Activated CD4-positive, alpha-beta T cell treated with anti-CD3 and anti-CD28 coated beads, Interleukin-2, amount 10 ng/mL, durations not matched to agents 24 days and 14 days (primary cell): ENCODE measurements at regions of chr14 and their contacts with region 1.

Region 1: GRCh38 chr14:89641495-89642175 is 224.6 kb upstream of the FOXN3 start:
- DNase-seq: peak; percentile 86
- H3K4me3 Mint-ChIP-seq: peak overlapping the region; percentile 81
- H3K27ac Mint-ChIP-seq: peak overlapping the region; percentile 97
- H3K4me1 Mint-ChIP-seq: peaks cover 58% of the 10 kb centered on the region
- H3K27me3 Mint-ChIP-seq: no peaks in the 10 kb centered on the region

Region 2: DNA sequence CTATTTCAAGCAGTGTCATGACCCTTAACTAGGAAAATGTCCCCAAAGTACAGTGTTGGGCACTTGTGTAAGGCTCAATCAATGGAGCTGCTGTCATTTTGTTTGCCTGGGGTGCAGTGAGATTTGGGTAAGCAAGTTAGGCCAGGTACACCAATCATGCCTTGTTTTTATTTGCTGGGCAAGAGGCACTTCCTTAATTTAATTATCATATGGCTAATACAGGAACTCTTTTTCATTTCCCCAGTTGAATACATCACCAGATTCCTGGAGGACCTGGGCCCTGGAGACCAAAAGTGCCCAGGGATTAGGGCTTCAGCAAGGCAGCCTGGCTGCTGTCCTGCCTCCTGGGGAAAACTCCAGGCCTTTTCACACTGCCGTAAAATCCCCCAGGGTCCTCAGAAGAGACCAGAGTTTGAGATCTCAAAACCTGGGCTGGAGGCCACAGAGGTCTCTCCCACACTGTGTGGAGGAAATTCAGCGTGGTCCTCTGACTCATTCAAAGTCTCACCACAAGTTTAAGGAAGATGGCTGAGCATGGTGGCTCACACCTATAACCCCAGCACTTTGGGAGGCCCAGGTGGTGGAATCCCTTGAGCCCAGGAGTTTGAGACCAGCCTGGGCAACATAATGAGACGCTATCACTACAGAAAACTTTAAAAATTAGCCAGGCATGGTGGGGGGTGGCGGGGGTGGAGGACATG is 196.2 kb before region 1 on chr14:
- intact Hi-C with region 1: loop called (anchors 2 kb)
- DNase-seq: peak; percentile 71
- H3K4me3 Mint-ChIP-seq: peak overlapping the region; percentile 55
- H3K27ac Mint-ChIP-seq: peak overlapping the region; percentile 85
- H3K4me1 Mint-ChIP-seq: peaks cover 44% of the 10 kb centered on the region
- H3K27me3 Mint-ChIP-seq: no peaks in the 10 kb centered on the region

Region 3: GRCh38 chr14:89489761-89490437 is 151.7 kb before region 1 on chr14:
- intact Hi-C with region 1: no loop called
- DNase-seq: no peak
- H3K4me3 Mint-ChIP-seq: no peak overlapping the region
- H3K27ac Mint-ChIP-seq: no peak overlapping the region
- H3K4me1 Mint-ChIP-seq: peaks cover 13% of the 10 kb centered on the region
- H3K27me3 Mint-ChIP-seq: no peaks in the 10 kb centered on the region

Region 4: GRCh38 chr14:89626233-89626806 is 15.3 kb before region 1 on chr14:
- intact Hi-C with region 1: loop called (anchors 1 kb)
- DNase-seq: no peak
- H3K4me3 Mint-ChIP-seq: no peak overlapping the region
- H3K27ac Mint-ChIP-seq: peak overlapping the region; percentile 84
- H3K4me1 Mint-ChIP-seq: peaks cover 57% of the 10 kb centered on the region
- H3K27me3 Mint-ChIP-seq: no peaks in the 10 kb centered on the region

Region 5: GRCh38 chr14:89690139-89690538 is 48.5 kb after region 1 on chr14:
- intact Hi-C with region 1: no loop called
- DNase-seq: no peak
- H3K4me3 Mint-ChIP-seq: no peak overlapping the region
- H3K27ac Mint-ChIP-seq: no peak overlapping the region
- H3K4me1 Mint-ChIP-seq: peaks cover 2% of the 10 kb centered on the region
- H3K27me3 Mint-ChIP-seq: no peaks in the 10 kb centered on the region

Region 6: DNA sequence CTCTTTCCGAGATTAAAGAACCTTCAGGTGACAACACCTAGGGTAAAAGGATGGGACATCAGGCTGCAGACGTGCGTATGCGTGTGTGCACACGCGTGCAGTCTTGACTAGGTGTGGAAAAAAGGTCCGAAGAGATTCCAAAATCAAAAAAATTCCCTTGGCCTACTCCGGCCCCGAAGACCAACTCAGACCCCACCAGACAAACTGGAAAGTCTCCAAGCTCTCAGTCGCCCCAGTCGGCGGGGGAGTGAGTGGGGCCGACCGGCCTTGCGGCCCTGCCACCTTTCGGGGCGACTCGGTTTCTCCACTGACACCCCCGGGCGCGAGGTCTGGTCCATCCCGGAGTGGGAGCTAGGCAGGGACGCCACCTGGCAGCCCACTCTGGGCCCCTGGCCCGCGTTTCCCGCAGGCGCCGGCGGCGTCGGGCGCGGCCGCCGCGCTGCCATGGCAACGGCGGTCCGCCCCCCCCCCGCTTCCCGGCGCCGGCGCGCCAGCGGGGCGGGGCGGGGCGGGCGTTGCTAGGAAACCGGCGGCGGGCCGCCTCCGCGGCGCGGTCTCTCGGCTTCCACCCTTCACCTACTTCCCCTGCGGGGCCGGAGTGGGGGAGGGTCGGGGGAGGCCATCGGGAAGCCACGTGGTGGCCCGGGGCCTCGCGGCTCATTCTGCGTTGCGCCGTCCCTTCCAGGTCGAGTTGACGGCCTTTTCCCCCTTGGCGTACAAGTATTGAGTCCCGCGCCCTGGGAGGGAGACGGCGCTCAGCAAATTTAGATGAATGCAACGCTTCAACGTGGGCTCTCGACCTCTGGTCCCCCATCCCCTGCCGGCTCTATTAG is 59.8 kb after region 1 on chr14:
- intact Hi-C with region 1: loop called (anchors 2 kb)
- DNase-seq: peak; percentile 95
- H3K4me3 Mint-ChIP-seq: peak overlapping the region; percentile 76
- H3K27ac Mint-ChIP-seq: peak overlapping the region; percentile 88
- H3K4me1 Mint-ChIP-seq: peaks cover 34% of the 10 kb centered on the region
- H3K27me3 Mint-ChIP-seq: no peaks in the 10 kb centered on the region